Left cardiac atrium (tissue), 4 donors: ENCODE measurements at regions of chr4 and their contacts with region 1.

Region 1: GRCh38 chr4:9762823-9763475 is 18.5 kb upstream of the DRD5 start:
- DNase-seq: peak; percentile 36
- ATAC-seq: peak in 1 of 2 donors; percentile 19

Region 2: DNA sequence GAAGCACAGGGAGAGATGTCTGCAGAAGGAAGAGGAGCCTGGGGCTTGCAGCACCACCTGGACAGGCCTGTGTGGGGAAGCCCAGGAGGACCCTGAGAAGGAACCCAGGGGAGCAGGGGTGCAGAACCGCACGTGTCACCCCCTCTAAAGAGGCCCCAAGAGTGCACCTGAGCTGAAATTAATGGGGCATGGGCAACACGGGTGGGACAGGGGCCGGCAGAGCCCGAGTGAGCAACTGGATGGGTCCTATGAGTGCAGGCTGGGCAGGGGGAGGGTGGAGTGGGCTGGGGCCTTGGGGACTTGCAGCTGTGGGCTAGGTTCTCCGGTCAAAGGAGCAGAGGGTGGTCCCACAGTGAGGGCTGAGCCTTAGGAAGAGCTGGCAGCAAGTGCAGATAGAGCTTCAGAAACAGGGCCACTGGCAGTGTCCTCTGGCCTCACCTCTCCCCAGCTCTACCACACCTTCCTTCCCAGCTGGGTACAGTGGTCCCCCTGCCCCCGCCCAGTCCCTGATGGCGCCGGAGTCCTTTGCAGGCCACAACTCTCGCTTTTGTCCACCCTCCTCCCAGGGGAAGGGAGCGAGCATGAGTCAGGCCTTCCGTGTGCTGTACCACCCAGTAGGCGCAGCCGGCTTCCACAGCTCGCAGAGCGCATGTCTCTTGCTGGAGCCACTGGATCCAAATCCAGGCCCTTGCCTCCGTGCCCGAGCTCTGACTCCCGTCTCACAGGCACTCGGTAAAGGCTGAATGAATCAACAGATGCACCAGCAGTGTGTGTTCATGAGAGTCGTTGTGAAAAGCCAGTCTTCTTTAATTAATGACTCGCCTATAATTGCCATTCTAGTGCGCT is 1022.9 kb before region 1 on chr4:
- intact Hi-C with region 1: no loop called
- DNase-seq: no peak
- ATAC-seq: no peak

Region 3: GRCh38 chr4:9845791-9846493 is 83.0 kb after region 1 on chr4:
- intact Hi-C with region 1: no loop called
- DNase-seq: no peak
- ATAC-seq: no peak

Region 4: GRCh38 chr4:9898596-9899305 is 135.8 kb after region 1 on chr4:
- intact Hi-C with region 1: loop called (anchors 1 to 5 kb)
- DNase-seq: peak; percentile 77
- ATAC-seq: peak; percentile 89 to 90

Region 5: DNA sequence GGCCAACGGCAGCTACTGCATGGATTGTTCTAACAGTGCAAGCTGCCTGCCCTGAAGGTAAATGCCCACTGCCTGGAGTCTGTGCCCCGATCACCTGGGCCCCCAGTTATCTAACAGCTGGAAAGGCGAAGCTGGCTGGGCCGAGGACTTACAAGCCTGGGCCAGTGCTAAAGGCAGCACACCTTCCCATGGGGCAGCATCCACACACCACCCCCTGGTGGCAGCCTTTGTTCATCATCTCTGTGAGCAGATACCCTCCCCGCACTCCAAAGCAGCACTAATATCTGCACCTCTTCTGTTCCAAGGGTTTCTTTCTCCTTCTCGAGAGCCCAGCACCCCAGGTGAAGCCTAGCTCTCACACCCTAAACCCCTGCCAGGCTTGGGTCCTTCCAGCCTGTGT is 250.8 kb after region 1 on chr4:
- intact Hi-C with region 1: loop called (anchors 2 to 5 kb)
- DNase-seq: peak; percentile 51
- ATAC-seq: peak in 1 of 2 donors; percentile 38

Region 6: GRCh38 chr4:10018818-10019461 is 256.0 kb after region 1 on chr4:
- intact Hi-C with region 1: loop called (anchors 2 to 5 kb)
- DNase-seq: peak; percentile 99
- ATAC-seq: peak; percentile 96 to 97

Region 7: GRCh38 chr4:10063544-10064300 is 300.8 kb after region 1 on chr4:
- intact Hi-C with region 1: loop called in 1 of 2 experiments (anchors 1 kb)
- DNase-seq: peak; percentile 80
- ATAC-seq: peak; percentile 95 to 99